Mammary epithelial cell (primary cell): ENCODE measurements at regions of chr22 and their contacts with region 1.

Region 1: DNA sequence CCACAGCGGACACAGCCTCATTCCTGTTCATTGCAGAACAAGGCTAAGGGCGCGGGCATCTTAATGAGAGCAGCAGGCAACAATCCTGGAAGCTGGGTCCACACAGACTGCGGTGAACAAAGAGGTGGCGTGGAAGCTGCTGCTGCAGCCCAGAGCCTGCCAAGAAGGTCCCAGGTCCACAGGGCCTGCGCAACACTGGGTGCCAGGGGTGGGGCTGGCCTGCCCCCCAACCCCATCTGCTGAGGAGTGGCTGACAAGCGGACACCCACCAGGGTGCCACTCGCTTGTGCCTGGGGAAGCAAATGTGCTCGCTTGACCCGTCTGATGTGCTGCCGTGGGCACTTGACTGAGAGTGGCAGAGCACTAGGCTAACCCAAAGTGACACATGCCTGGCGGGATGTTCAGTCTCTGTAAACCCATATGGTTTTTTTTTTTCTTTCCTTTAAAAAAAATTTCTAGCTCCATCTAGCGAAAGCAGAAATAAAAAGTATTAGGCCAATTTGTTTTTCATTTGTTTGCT is 83.2 kb upstream of the PITPNB start:
- DNase-seq: no peak
- H3K4me3 ChIP-seq: no peak overlapping the region
- H3K27ac ChIP-seq: no peak overlapping the region
- H3K4me1 ChIP-seq: peaks cover 2% of the 10 kb centered on the region
- H3K27me3 ChIP-seq: no peaks in the 10 kb centered on the region
- CTCF ChIP-seq: no peak

Region 2: DNA sequence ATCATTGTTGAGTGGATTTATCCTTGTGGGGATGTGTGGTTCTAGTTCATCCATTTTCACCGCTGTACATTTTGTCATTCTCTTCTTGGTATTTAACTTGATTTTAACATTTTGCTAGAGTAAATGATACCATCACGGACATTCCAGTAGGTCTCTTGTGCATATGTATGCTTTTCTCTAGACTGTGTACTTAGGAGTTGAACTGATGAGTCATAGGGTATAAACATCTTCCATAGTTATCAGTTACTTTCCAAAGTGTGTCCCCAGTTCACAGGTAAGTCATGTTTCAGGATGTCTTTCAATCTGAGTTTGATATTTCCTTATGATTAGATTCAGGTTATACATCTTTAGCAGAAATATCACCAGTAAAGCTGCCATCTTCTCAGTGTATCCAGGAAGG is 36.7 kb before region 1 on chr22:
- CTCF ChIA-PET with region 1: no interaction called
- dilution Hi-C with region 1: loop called (anchors 5 kb)
- in situ Hi-C with region 1: no loop called
- intact Hi-C with region 1: no loop called
- DNase-seq: no peak
- H3K4me3 ChIP-seq: no peak overlapping the region
- H3K27ac ChIP-seq: no peak overlapping the region
- H3K4me1 ChIP-seq: no peaks in the 10 kb centered on the region
- H3K27me3 ChIP-seq: no peaks in the 10 kb centered on the region
- CTCF ChIP-seq: no peak

Region 3: GRCh38 chr22:27990879-27991278 is 11.4 kb before region 1 on chr22:
- CTCF ChIA-PET with region 1: no interaction called
- dilution Hi-C with region 1: no loop called
- in situ Hi-C with region 1: no loop called
- intact Hi-C with region 1: no loop called
- DNase-seq: no peak
- H3K4me3 ChIP-seq: no peak overlapping the region
- H3K27ac ChIP-seq: no peak overlapping the region
- H3K4me1 ChIP-seq: no peaks in the 10 kb centered on the region
- H3K27me3 ChIP-seq: no peaks in the 10 kb centered on the region
- CTCF ChIP-seq: peak in 1 of 2 donors; percentile 37

Region 4: GRCh38 chr22:28344918-28345703 is 342.9 kb after region 1 on chr22:
- CTCF ChIA-PET with region 1: no interaction called
- dilution Hi-C with region 1: no loop called
- in situ Hi-C with region 1: no loop called
- intact Hi-C with region 1: no loop called
- DNase-seq: peak; percentile 61
- H3K4me3 ChIP-seq: no peak overlapping the region
- H3K27ac ChIP-seq: peak overlapping the region; percentile 26
- H3K4me1 ChIP-seq: peaks cover 10% of the 10 kb centered on the region
- H3K27me3 ChIP-seq: no peaks in the 10 kb centered on the region
- CTCF ChIP-seq: no peak